ENCODE measurements at regions of chr15 and their contacts with region 1.

Region 1: GRCh38 chr15:60520825-60521368 is 42.0 kb upstream of the ICE2 start:
- DNase-seq: peak; percentile 75
- H3K4me3 Mint-ChIP-seq: no peak overlapping the region
- H3K27ac Mint-ChIP-seq: peak overlapping the region; percentile 73
- H3K4me1 Mint-ChIP-seq: peaks cover 40% of the 10 kb centered on the region
- H3K27me3 Mint-ChIP-seq: no peaks in the 10 kb centered on the region
- CTCF ChIP-seq: peak; percentile 79

Region 2: DNA sequence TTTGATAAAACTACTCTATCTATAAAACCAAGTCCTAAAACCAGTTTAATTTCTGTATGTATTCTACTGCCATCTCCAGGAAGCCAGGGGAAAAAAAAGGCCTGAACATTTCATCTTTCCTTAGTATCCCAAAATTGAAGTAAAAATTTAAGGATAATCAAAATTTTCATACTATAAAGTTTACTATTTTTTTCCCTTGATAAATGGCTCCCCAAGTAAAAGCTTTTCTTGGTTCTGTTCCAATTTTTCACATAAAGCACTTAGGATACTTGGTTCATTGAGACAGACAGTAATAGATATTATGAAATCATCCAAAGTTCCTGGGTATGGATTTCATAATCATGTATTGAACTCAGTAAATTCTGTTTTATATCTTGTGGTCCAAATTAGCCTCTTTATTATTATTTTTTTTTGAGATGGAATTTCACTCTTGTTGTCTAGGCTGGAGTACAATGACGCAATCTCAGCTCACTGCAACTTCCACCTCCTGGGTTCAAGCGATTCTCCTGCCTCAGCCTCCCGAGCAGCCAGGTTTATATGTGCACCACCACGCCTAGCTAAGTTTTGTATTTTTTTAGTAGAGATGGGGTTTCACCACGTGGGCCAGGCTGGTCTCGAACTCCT is 76.5 kb before region 1 on chr15:
- CTCF ChIA-PET with region 1: interaction called, 11 read pairs
- POLR2A ChIA-PET with region 1: no interaction called
- intact Hi-C with region 1: no loop called
- DNase-seq: peak; percentile 50
- H3K4me3 Mint-ChIP-seq: no peak overlapping the region
- H3K27ac Mint-ChIP-seq: peak overlapping the region; percentile 39
- H3K4me1 Mint-ChIP-seq: peaks cover 5% of the 10 kb centered on the region
- H3K27me3 Mint-ChIP-seq: no peaks in the 10 kb centered on the region
- CTCF ChIP-seq: peak; percentile 45

Region 3: DNA sequence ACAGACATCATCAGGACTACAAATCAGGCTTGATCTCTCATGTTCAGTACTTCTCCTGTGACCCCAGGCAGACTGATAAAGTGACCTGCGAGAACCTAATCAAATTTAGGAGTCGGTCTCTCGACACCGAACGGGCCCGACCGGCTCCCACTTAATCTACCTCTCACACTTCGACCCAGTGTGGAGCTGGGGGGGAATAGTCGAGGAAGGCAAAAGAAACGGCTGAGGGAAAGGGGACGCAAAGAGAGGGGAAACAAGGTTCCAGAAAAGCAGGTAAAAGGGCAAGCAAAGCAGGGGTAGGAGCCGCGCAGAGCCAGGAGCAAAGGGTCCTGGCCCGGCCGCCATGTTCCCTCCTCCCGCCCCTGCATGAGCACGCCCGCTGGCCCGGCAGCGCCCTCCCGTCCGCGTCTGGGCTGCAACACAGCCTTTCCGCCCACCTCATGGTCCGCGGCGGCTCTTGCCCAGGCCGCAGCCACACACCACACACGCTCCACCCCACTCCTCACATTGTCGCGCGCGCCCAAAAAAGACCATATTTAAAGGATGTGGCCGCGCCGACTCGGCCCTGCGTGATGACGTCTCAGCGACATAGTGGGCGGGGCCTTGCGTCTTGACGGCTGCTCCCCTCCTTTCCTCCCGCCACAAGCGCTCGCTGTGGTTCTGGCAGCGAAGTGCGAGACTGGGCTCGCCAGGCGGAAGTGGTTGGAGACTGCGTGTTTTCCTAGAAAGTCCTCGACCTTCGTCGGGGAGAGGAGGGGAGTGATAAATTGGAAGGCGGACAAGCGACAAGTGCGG is 42.1 kb before region 1 on chr15 and contains the start of gene ICE2:
- CTCF ChIA-PET with region 1: interaction called, 9 read pairs
- POLR2A ChIA-PET with region 1: interaction called, 16 read pairs
- intact Hi-C with region 1: no loop called
- DNase-seq: peak; percentile 93
- H3K4me3 Mint-ChIP-seq: peak within 1 kb of the TSS; percentile 90
- H3K27ac Mint-ChIP-seq: peak within 1 kb of the TSS; percentile 96
- H3K4me1 Mint-ChIP-seq: peaks cover 32% of the 10 kb centered on the region
- H3K27me3 Mint-ChIP-seq: no peaks in the 10 kb centered on the region
- CTCF ChIP-seq: no peak
- total RNA-seq, gene ICE2: 55.1 and 57.9 TPM in 2 replicates

Region 4: GRCh38 chr15:60496853-60497252 is 24.0 kb before region 1 on chr15:
- CTCF ChIA-PET with region 1: interaction called, 19 read pairs
- POLR2A ChIA-PET with region 1: no interaction called
- intact Hi-C with region 1: no loop called
- DNase-seq: no peak
- H3K4me3 Mint-ChIP-seq: no peak overlapping the region
- H3K27ac Mint-ChIP-seq: no peak overlapping the region
- H3K4me1 Mint-ChIP-seq: no peaks in the 10 kb centered on the region
- H3K27me3 Mint-ChIP-seq: no peaks in the 10 kb centered on the region
- CTCF ChIP-seq: no peak

Region 5: GRCh38 chr15:60535743-60536142 is 14.8 kb after region 1 on chr15:
- CTCF ChIA-PET with region 1: interaction called, 21 read pairs
- POLR2A ChIA-PET with region 1: interaction called, 6 read pairs
- intact Hi-C with region 1: no loop called
- DNase-seq: no peak
- H3K4me3 Mint-ChIP-seq: no peak overlapping the region
- H3K27ac Mint-ChIP-seq: no peak overlapping the region
- H3K4me1 Mint-ChIP-seq: no peaks in the 10 kb centered on the region
- H3K27me3 Mint-ChIP-seq: no peaks in the 10 kb centered on the region
- CTCF ChIP-seq: no peak